ENCODE measurements at regions of chr4 and their contacts with region 1.

Region 1: GRCh38 chr4:81471588-81472288 is at the start of gene RASGEF1B:
- ATAC-seq: peak; percentile 79 to 93 (median 88)
- H3K4me3 ChIP-seq: peak within 1 kb of the TSS; percentile 60 to 83 (median 72)
- H3K27ac ChIP-seq: peak within 1 kb of the TSS in 1 of 2 donors; percentile 42
- H3K4me1 ChIP-seq: peaks cover 13 to 16% of the 10 kb centered on the region in 2 donors
- total RNA-seq, gene RASGEF1B: 2.1 to 65.9 (median 44.3) TPM

Region 2: DNA sequence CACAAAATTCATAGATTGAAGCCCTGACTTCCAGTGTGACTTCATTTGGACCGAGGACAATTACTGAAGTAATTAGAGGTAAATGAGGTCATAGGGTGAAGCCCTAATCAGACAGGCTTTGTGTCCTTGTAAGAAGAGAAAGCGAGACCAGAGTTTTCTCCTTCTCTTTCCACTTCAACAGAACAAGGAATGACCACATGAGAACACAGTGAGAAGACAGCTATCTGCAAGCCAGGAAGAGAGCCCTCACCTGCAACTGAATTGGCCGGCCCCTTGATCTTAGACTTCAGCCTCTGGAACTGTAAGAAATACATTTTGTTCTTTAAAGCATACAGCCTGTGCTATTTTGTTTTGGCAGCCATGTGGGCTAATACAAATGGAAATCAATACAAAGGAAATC is 189.6 kb before region 1 on chr4:
- in situ Hi-C with region 1: no loop called
- ATAC-seq: no peak
- H3K4me3 ChIP-seq: no peak overlapping the region
- H3K27ac ChIP-seq: no peak overlapping the region
- H3K4me1 ChIP-seq: no peaks in the 10 kb centered on the region

Region 3: DNA sequence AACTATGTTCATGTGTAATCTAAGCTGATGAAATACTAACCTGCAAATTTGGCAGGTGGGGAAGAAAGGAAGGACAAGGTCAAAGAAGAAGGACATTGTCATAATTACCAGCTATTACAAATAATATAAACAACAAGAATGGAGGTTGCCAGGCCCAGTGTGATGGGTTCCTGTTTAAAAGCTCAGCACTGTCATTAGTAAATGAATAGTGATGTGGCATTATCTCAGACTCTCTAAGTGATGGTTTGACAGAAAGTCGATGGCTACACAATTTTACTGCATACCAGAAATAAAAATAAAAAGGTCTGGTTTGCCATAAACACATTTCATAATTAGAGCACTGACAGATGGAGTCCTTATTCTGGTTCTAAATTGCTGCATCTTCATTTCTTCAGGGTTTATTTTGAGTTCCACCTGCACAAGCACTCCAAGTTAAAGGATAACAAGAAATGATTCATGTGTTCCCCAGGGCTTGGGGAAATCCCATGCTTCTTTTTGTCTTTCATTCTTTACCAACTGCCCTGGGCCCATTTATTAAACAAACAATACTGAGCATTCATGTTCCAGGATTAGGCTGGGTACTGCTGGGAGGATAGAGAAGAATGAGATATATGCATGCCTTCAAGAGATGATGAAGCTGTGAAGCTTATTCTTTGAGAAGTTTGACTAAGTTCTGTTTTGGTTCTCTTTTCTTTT is 367.8 kb after region 1 on chr4:
- in situ Hi-C with region 1: loop called (anchors 10 to 25 kb)
- ATAC-seq: peak in 2 of 8 experiments; percentile 32 to 49
- H3K4me3 ChIP-seq: no peak overlapping the region
- H3K27ac ChIP-seq: no peak overlapping the region
- H3K4me1 ChIP-seq: peaks cover 7% of the 10 kb centered on the region in 2 donors

Region 4: GRCh38 chr4:81844717-81845116 is 373.0 kb after region 1 on chr4:
- in situ Hi-C with region 1: loop called (anchors 10 to 25 kb)
- ATAC-seq: peak; percentile 83 to 98 (median 93)
- H3K4me3 ChIP-seq: no peak overlapping the region
- H3K27ac ChIP-seq: no peak overlapping the region
- H3K4me1 ChIP-seq: peaks cover 12 to 16% of the 10 kb centered on the region in 2 donors

Region 5: GRCh38 chr4:82044142-82044993 is 572.6 kb after region 1 on chr4:
- in situ Hi-C with region 1: loop called in 1 of 9 experiments (anchors 25 kb)
- ATAC-seq: peak; percentile 90 to 96 (median 94)
- H3K4me3 ChIP-seq: peak overlapping the region; percentile 48 to 80 (median 56)
- H3K27ac ChIP-seq: peak overlapping the region; percentile 7 to 61
- H3K4me1 ChIP-seq: peaks cover 17 to 22% of the 10 kb centered on the region in 2 donors

Region 6: DNA sequence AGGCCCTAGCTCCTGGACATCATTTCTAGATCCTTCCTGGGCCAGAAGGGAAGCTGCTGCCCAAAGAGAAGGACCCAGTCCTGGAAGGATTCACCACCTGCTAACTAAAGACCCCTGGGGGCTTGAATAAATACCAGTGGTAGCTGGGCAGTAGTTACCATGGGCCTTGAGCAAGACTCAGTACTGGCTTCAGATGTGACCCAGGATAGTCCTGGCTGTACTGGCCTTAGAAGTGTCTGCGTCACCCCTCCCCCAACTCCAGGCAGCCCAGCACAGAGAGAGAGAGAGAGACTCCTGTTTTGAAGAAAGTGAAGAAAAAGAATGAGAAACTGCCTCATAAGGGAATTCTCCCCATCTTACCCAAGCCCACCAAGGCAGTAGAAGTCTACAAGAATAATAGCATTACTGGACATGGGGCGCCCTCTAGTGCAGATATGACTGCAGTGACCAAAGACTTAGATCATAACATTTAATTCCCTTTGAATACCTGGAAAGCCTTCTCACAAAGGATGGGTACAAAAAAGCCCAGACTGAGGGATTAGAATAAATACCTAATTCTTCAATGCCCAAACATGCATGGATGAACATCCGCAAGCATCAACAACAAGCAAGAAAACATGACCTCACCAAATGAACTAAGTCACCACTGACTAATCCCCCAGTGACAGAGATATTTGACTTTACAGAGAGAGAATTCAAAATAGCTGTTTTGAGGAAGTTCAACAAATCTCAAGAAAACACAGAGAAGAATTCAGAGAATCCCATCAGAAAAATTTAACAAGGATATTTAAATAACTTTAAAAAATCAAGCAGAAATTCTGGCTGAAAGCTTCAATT is 730.3 kb after region 1 on chr4:
- in situ Hi-C with region 1: loop called in 2 of 9 experiments (anchors 10 to 25 kb)
- ATAC-seq: peak; percentile 43 to 74 (median 58)
- H3K4me3 ChIP-seq: no peak overlapping the region
- H3K27ac ChIP-seq: no peak overlapping the region
- H3K4me1 ChIP-seq: no peaks in the 10 kb centered on the region

Region 7: GRCh38 chr4:82268050-82268825 is 796.5 kb after region 1 on chr4:
- in situ Hi-C with region 1: loop called in 1 of 9 experiments (anchors 25 kb)
- ATAC-seq: peak; percentile 97 to 100 (median 99)
- H3K4me3 ChIP-seq: no peak overlapping the region
- H3K27ac ChIP-seq: peak overlapping the region in 1 of 2 donors; percentile 15
- H3K4me1 ChIP-seq: peaks cover 7% of the 10 kb centered on the region in 2 donors

Measured in motor neuron (in vitro differentiated cells).